Dorsolateral prefrontal cortex (tissue), 120 donors: ENCODE measurements at regions of chr5 and their contacts with region 1.

Region 1: GRCh38 chr5:132293066-132293991 is 865 bp upstream of the SLC22A4 start:
- DNase-seq: peak; percentile 72 to 92 (median 87)
- H3K4me3 ChIP-seq: peak overlapping the region; percentile 53 to 90 (median 76)
- H3K27ac ChIP-seq: peak overlapping the region; percentile 71 to 100 (median 97)
- H3K27me3 ChIP-seq: no peaks in the 10 kb centered on the region
- CTCF ChIP-seq: peak in 43 of 56 donors; percentile 9 to 66 (median 29)

Region 2: DNA sequence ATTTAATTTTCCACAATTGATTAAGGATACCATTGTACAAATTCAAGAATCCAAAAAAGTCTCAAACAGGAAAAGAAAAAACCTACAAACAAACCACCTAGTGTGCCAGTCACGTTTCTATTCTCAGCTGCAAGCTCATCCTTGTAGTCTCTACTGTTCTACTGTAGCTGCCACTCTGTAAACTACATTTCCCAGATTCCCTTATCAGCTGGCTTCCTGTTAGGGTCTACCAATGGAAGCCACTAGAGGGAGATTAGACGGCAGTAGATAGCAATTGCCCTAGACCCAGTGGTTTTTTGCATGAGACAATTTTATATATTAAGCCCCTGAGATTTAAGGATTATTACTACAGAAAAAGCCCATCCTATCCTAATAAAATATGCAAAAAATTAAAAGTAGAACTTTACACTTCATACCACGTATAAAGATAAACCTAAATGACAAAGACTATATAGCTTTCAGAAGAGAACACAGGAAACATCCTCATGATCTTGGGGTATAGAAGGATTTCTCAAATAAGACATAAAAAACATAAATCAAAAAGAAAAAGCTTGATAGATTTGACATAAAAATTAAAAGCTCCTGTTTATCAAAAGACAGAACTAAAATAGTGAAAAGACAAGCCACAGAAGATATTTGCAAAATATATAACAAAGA is 103.0 kb before region 1 on chr5:
- intact Hi-C with region 1: loop called in 1 of 2 experiments (anchors 5 kb)
- DNase-seq: peak in 2 of 10 donors; percentile 22 to 41
- H3K4me3 ChIP-seq: no peak overlapping the region
- H3K27ac ChIP-seq: no peak overlapping the region
- H3K27me3 ChIP-seq: no peaks in the 10 kb centered on the region
- CTCF ChIP-seq: peak; percentile 43 to 82 (median 70)

Region 3: GRCh38 chr5:132238169-132238744 is 55.1 kb before region 1 on chr5:
- intact Hi-C with region 1: loop called in 1 of 2 experiments (anchors 5 kb)
- DNase-seq: peak in 9 of 10 donors; percentile 55 to 86 (median 74)
- H3K4me3 ChIP-seq: no peak overlapping the region
- H3K27ac ChIP-seq: no peak overlapping the region
- H3K27me3 ChIP-seq: no peaks in the 10 kb centered on the region
- CTCF ChIP-seq: peak; percentile 51 to 89 (median 79)

Region 4: GRCh38 chr5:132260714-132261551 is 32.4 kb before region 1 on chr5:
- intact Hi-C with region 1: loop called in 1 of 2 experiments (anchors 2 kb)
- DNase-seq: peak in 5 of 10 donors; percentile 65 to 84 (median 76)
- H3K4me3 ChIP-seq: peak overlapping the region in 1 of 59 donors; percentile 71
- H3K27ac ChIP-seq: peak overlapping the region in 56 of 59 donors; percentile 16 to 93 (median 84)
- H3K27me3 ChIP-seq: peaks cover 0 to 5% (median 0%) of the 10 kb centered on the region in 45 donors
- CTCF ChIP-seq: no peak

Region 5: GRCh38 chr5:132369474-132370180 is 76.3 kb after region 1 on chr5 and contains the start of gene SLC22A5:
- intact Hi-C with region 1: loop called in 1 of 2 experiments (anchors 2 kb)
- DNase-seq: peak in 5 of 10 donors; percentile 39 to 78 (median 70)
- H3K4me3 ChIP-seq: peak within 1 kb of the TSS; percentile 56 to 92 (median 81)
- H3K27ac ChIP-seq: peak within 1 kb of the TSS in 58 of 59 donors; percentile 13 to 93 (median 80)
- H3K27me3 ChIP-seq: no peaks in the 10 kb centered on the region
- CTCF ChIP-seq: peak in 9 of 56 donors; percentile 6 to 35 (median 13)
- total RNA-seq, gene SLC22A5: 8.0 to 25.9 (median 13.9) TPM

Region 6: GRCh38 chr5:132490486-132491367 is 197.4 kb after region 1 on chr5 and contains the start of gene IRF1:
- intact Hi-C with region 1: loop called in 1 of 2 experiments (anchors 10 kb)
- DNase-seq: peak; percentile 89 to 98 (median 94)
- H3K4me3 ChIP-seq: peak within 1 kb of the TSS; percentile 58 to 92 (median 81)
- H3K27ac ChIP-seq: peak within 1 kb of the TSS; percentile 58 to 97 (median 92)
- H3K27me3 ChIP-seq: no peaks in the 10 kb centered on the region
- CTCF ChIP-seq: peak in 48 of 56 donors; percentile 17 to 66 (median 42)
- total RNA-seq, gene IRF1: 2.5 to 38.3 (median 8.3) TPM